ENCODE measurements at regions of chr7 and their contacts with region 1.

Region 1: DNA sequence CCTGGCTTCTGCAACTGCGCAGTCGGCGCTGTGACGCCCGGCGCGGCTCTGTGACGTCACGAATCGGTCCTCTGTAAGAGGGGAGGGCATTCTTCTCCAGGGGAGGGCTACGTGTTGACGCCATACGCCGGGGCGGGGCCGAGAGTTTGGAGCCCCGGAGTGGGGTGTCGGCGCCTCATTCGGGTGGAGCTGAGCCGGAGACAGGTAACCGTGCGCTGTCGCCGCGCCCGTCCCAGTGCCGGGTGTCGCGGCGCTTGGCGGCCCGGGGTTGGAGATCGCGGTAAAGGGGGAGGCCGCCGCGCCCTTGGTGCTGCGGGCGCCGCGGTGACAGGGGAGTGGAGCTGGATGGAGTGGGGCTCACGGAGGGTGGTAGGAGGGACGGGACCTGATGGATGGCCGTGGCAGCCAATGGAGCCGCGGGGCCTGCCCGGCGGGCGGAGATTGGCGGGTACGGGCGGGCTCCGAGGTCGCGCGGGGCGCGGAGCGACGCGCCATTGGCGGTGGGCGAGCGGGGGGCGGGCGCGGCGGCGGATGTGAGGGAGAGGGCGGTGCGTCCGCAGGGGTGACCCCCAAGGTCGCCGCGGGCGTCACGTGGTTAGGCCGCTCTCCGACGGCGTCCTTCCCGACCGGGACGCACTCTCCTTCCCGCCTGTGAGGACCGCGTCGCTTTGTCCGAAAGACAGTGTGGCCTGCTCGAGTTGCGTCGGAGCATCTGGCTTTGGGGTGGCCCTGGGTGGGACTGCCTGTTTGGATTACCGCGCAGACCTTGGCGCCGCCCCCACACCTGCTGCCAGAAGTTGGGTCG is at the start of gene OGDH:
- DNase-seq: peak; percentile 98 to 100 (median 99)
- H3K4me3 ChIP-seq: peak within 1 kb of the TSS; percentile 60 to 99 (median 88)
- H3K27ac ChIP-seq: peak within 1 kb of the TSS; percentile 88 to 100 (median 98)
- H3K27me3 ChIP-seq: no peaks in the 10 kb centered on the region
- CTCF ChIP-seq: peak in 11 of 56 donors; percentile 1 to 33 (median 12)
- total RNA-seq, gene OGDH: 86.3 to 153 (median 120) TPM

Region 2: DNA sequence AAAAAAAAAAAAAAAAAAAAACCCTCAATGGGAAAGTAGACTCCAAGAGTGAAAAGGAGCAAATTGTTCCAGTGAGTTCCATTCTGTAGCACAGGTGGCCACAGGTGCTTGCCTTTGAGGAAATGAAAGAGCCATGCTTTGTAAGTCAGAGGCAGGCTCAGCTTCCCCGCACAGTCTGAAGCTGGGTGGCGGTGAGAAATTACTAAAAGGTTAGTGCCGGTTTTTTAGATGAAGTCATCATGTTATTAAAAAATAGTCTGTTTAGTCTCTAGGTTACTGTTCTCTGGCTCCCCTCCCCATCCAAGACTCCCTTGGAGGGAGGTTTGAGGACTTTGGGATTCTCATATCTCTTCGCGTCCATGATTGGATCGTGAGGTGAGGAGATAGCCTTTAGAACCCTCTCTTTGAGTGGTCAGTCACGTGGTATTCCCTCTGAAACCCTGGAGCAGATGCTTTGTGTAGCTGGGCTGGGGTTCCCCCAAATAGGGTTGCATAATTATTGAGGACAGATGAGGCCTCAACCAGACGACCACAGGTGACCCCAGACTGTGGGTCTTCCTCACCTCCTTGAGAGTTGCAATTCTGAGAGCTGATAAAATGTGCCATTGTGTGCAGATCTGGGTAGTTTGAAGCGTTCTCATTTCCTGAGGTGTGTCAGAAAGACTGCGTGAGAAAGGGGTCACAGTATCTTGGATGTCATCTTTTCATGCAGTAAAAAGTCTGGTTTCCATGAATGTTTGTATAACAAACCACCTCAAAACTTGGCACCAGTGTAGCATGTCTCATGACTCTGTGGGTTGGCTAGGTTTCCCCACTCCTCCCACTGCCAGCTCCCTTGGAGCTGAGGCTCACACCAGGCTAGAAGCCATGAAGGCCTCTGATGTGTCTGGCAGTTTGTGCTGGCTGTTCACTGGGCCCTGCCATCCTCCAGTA is 26.9 kb after region 1 on chr7:
- intact Hi-C with region 1: loop called in 1 of 2 experiments (anchors 2 kb)
- DNase-seq: peak in 6 of 10 donors; percentile 40 to 51 (median 41)
- H3K4me3 ChIP-seq: no peak overlapping the region
- H3K27ac ChIP-seq: peak overlapping the region in 57 of 59 donors; percentile 5 to 83 (median 73)
- H3K27me3 ChIP-seq: no peaks in the 10 kb centered on the region
- CTCF ChIP-seq: no peak

Region 3: DNA sequence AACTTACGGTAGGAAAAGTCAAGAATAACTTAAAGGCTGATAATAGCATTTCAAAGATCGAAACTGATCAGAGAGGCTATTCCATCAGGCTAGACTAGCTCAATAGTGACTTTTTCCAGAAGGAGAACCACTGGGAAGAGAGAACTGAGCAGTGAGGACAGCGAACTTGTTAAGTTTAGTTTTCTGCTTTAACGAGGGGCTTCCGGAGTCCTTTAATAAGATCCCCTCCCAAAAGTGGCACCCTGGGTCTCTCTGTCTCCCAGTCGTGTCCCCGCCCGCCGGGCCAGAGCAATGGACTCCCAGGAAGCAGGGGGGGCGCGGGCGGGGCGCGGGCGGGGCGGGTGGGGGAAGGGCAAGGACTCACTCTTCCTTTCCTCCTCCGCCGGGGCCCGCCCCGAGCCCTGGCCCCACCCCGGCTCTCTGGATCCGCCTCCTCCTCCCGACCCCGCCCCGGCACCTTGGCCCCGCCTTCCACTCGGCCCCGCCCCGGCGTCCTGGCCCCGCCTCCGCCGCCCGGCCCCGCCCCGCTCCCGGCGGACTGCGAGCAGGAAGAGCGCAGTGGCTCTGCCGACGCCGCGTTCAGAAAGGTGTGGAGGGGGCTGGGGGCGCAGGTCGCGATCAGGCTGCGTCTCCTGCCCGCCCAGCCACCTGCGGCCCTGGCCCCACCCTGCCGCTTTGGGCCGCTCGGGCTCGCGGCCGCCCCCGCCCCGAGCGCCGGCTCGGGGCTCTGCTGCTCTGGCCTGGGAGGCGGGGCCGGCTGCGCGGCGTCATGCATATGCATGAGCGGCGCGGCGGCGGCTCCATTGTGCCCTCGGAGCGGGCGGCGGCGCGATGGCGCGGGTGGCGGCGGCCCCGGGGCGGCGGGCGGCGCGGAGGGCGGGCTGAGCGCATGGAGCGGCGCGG is 141.6 kb after region 1 on chr7 and contains the start of gene ZMIZ2:
- intact Hi-C with region 1: loop called (anchors 2 kb)
- DNase-seq: peak; percentile 82 to 97 (median 92)
- H3K4me3 ChIP-seq: peak within 1 kb of the TSS; percentile 70 to 97 (median 86)
- H3K27ac ChIP-seq: peak within 1 kb of the TSS; percentile 23 to 98 (median 92)
- H3K27me3 ChIP-seq: no peaks in the 10 kb centered on the region
- CTCF ChIP-seq: peak in 4 of 56 donors; percentile 9 to 31 (median 20)
- total RNA-seq, gene ZMIZ2: 106 to 231 (median 160) TPM

Region 4: DNA sequence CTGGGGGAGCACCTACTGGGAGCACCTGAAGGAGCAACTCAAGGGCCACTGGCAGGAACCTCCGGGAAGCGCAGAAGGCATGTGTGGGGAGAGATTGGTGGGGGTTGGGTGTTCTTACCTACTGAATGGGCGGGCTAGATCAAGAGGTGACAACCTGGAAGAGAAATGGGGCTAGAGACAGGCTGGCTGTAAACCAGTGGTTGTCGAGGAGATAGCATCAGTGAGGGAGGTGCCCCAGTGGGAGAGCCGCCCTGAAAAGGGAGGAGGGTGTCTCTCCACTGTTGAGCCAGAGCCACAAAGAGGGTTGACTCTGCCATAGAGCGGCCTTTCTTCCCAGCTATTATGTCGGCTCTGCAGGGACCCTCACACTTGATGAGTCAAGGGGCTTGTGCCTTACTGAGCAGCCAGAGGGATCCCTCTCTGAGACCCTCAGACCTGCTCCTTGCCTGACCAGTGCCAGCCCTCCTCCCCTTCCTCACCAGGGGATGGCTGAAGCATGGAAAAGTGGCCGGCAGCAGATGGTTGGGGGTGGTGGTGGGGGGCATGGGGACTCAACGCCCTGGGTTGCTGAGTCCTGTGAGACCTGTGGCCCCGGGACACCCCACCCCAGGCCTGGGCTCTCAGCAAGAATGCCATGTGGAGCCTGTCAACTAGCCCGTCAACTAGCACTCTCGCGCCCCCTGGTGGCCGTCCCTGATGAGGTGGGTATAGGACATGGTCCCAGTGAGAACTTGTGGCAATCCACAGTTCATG is 315.1 kb after region 1 on chr7:
- intact Hi-C with region 1: no loop called
- DNase-seq: peak; percentile 84 to 97 (median 92)
- H3K4me3 ChIP-seq: no peak overlapping the region
- H3K27ac ChIP-seq: no peak overlapping the region
- H3K27me3 ChIP-seq: peaks cover 0 to 2% (median 0%) of the 10 kb centered on the region in 45 donors
- CTCF ChIP-seq: peak; percentile 58 to 96 (median 90)

Measured in dorsolateral prefrontal cortex (tissue), 120 donors.